ENCODE measurements at regions of chr3 and their contacts with region 1.

Region 1: DNA sequence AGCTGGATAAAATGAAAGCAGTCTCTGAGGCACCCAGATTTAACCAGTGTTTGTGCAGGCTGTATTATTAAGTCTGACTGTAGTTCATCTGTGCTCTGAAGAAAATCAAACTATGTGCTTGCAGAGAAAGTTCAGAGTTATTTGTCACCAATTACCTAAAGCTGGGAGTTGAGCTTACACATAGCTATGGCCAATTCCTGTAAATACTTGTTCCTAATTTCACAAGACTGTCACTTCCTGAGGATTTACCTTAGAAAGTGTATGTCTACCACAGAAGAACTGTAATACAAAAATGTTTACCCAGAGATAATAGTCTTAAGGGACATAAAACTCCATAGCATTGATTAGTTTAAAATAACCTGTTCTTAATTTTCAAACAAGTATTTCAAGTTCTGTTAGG is 628.4 kb upstream of the TGFBR2 start:
- DNase-seq: no peak
- H3K4me3 ChIP-seq: no peak overlapping the region
- H3K27ac ChIP-seq: no peak overlapping the region
- H3K4me1 ChIP-seq: no peaks in the 10 kb centered on the region
- H3K27me3 ChIP-seq: no peaks in the 10 kb centered on the region
- CTCF ChIP-seq: no peak
- POLR2A ChIP-seq: no peak

Region 2: DNA sequence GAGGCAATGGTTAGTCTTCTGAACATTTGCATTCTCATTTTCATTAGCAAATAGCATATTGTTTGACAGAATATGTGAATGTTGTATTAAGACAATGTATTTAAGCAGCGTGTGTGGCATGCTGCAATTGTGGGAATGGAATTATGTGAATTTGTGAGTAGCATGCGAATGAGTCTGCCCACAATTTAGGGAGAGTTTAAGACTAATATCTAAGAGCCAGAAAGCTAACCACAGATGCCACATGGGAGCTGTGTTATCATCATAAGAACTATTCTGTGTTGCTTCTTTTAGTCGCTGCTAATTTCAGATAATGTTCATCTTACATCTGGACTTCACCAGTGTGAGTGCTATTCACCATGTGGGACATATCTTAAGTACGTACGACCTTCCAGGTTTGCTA is 202.7 kb before region 1 on chr3:
- intact Hi-C with region 1: no loop called
- DNase-seq: no peak
- H3K4me3 ChIP-seq: no peak overlapping the region
- H3K27ac ChIP-seq: no peak overlapping the region
- H3K4me1 ChIP-seq: no peaks in the 10 kb centered on the region
- H3K27me3 ChIP-seq: no peaks in the 10 kb centered on the region
- CTCF ChIP-seq: no peak
- POLR2A ChIP-seq: no peak

Region 3: GRCh38 chr3:29991198-29991597 is 13.2 kb after region 1 on chr3:
- intact Hi-C with region 1: loop called (anchors 1 kb)
- DNase-seq: no peak
- H3K4me3 ChIP-seq: no peak overlapping the region
- H3K27ac ChIP-seq: no peak overlapping the region
- H3K4me1 ChIP-seq: no peaks in the 10 kb centered on the region
- H3K27me3 ChIP-seq: no peaks in the 10 kb centered on the region
- CTCF ChIP-seq: no peak
- POLR2A ChIP-seq: no peak